Mammary epithelial cell (primary cell): ENCODE measurements at regions of chr17 and their contacts with region 1.

Region 1: DNA sequence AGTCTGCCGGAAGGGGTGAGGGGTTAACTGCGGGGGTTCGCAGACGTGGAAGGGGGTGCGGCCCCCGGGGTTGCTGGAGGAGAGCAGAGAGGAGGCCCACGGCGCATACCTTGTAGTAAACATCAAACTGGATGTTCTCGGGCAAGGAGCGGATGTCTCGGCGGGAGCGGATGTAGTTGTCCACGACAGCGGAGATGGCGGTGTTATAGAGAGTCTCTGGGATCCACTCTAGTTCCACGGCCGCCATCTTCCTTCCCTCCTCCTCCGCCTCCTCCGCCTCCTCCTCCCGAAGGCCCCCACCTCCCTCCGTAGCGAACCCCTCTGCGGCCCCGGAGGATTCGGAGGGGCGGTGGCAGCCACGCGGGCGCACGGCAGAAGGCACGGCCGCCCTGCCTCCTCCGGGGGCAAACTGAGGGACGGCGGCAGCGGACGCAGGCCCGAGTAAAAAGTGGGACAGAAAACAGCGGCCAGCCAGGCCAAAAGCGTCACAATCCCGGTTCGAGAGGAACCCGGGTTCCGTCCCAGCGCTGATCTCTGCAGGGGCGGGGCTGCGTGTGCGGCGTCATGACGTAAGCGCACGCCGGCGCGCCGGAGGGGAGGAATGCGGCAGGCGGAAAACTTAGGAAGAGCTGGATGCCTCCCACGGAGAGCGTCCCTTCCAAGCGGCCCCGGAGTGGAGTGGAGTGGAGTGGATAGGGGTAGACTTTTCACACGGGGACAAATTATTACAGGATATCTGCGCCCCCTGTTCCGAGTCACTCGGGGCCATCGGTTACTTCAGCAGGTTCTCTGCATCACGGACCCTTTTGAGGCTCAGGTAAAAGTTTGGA is at the start of gene APPBP2:
- DNase-seq: peak; percentile 86
- H3K4me3 ChIP-seq: peak within 1 kb of the TSS; percentile 74 to 97 (median 88)
- H3K27ac ChIP-seq: peak within 1 kb of the TSS; percentile 79
- H3K4me1 ChIP-seq: peaks cover 15% of the 10 kb centered on the region
- H3K27me3 ChIP-seq: no peaks in the 10 kb centered on the region
- CTCF ChIP-seq: peak in 1 of 2 donors; percentile 5
- total RNA-seq, gene APPBP2: 31.2 to 38.1 TPM

Region 2: DNA sequence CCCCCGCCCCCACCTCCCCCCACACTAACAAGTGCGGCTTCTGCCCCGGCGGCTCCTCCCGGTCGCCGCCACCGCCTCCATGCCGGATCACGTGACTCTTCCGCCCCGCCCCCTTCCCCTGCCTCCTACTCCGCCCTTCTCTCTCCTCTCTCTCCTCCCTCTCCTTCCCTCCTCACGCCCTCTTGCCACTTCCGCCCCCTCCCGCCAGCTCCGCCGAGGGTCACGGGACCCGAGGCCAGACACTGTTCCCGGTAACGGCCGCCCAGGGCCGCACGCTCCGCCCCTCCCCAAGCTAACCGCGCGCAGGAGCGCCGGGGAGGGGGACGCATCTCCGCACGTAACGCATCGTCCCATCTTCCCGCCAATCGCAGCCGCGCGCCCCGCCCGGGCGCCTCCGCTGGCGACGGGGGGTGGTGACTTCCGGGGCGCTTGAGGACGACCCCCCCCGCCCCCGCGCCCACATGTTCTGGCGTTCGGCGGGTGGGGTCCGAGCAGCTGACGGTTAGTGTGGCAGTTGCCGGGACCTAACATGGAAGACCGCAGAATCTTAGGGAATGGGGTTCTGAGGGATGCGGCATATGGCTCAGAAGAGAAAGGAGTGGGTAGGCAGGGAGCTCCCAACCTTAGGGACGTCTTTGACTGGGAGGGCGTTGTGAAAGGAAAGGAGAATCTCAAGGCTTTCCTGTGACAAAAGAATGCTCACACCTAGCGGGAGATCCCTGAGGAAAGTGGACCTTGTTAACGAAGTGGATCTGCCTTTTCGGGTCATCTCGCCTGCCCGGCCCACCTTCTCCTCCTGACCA is 133.7 kb before region 1 on chr17 and contains the start of gene USP32:
- CTCF ChIA-PET with region 1: no interaction called
- dilution Hi-C with region 1: no loop called
- in situ Hi-C with region 1: no loop called
- intact Hi-C with region 1: no loop called
- DNase-seq: peak; percentile 98
- H3K4me3 ChIP-seq: peak within 1 kb of the TSS; percentile 66 to 93 (median 75)
- H3K27ac ChIP-seq: peak within 1 kb of the TSS; percentile 91
- H3K4me1 ChIP-seq: peaks cover 22% of the 10 kb centered on the region
- H3K27me3 ChIP-seq: no peaks in the 10 kb centered on the region
- CTCF ChIP-seq: peak in 1 of 2 donors; percentile 61
- total RNA-seq, gene USP32: 56.8 to 63.0 TPM

Region 3: GRCh38 chr17:60577147-60577915 is 51.4 kb after region 1 on chr17:
- CTCF ChIA-PET with region 1: no interaction called
- dilution Hi-C with region 1: no loop called
- in situ Hi-C with region 1: loop called in 1 of 2 experiments (anchors 5 kb)
- intact Hi-C with region 1: no loop called
- DNase-seq: no peak
- H3K4me3 ChIP-seq: peak overlapping the region; percentile 31 to 41 (median 32)
- H3K27ac ChIP-seq: no peak overlapping the region
- H3K4me1 ChIP-seq: no peaks in the 10 kb centered on the region
- H3K27me3 ChIP-seq: no peaks in the 10 kb centered on the region
- CTCF ChIP-seq: peak in 1 of 2 donors; percentile 23

Region 4: DNA sequence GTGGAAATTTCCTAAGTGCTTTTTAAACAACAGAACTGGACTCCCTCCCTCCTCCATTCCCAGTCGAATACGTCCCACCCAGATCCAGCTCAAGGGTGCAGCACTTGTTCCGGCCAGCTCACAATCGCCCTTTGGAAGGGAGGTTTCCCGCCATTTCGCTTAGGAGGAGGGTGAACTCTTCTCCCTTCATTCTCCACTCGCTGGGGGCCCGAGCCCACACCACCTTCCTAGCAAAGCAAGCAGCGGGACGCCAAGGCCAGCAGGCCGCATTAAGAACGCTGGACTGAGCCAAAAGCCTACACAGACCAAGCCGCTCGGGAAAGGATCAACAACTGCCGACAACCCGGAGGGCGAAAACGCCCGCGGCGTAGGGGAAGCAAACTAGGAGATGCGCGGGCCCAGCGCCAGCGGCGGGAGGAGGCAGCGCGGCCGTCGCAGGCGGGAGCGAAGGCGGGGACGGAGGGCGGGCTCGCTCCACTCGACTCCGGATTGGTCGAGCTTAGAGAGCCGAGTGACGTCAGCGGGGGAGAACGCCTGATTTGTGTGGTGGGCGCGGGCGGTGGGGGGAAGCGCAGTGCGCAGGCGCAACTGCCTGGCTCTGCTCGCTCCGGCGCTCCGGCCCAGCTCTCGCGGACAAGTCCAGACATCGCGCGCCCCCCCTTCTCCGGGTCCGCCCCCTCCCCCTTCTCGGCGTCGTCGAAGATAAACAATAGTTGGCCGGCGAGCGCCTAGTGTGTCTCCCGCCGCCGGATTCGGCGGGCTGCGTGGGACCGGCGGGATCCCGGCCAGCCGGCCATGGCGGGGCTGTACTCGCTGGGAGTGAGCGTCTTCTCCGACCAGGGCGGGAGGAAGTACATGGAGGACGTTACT is 74.0 kb after region 1 on chr17 and contains the start of gene PPM1D:
- CTCF ChIA-PET with region 1: no interaction called
- dilution Hi-C with region 1: no loop called
- in situ Hi-C with region 1: no loop called
- intact Hi-C with region 1: loop called (anchors 2 kb)
- DNase-seq: peak; percentile 98
- H3K4me3 ChIP-seq: peak within 1 kb of the TSS; percentile 75 to 90 (median 87)
- H3K27ac ChIP-seq: peak within 1 kb of the TSS; percentile 77
- H3K4me1 ChIP-seq: peaks cover 12% of the 10 kb centered on the region
- H3K27me3 ChIP-seq: no peaks in the 10 kb centered on the region
- CTCF ChIP-seq: no peak
- total RNA-seq, gene PPM1D: 9.3 to 9.5 TPM

Region 5: GRCh38 chr17:60874772-60875171 is 348.9 kb after region 1 on chr17:
- CTCF ChIA-PET with region 1: no interaction called
- dilution Hi-C with region 1: no loop called
- in situ Hi-C with region 1: no loop called
- intact Hi-C with region 1: no loop called
- DNase-seq: no peak
- H3K4me3 ChIP-seq: no peak overlapping the region
- H3K27ac ChIP-seq: no peak overlapping the region
- H3K4me1 ChIP-seq: no peaks in the 10 kb centered on the region
- H3K27me3 ChIP-seq: no peaks in the 10 kb centered on the region
- CTCF ChIP-seq: no peak